Right cardiac atrium (tissue), 5 donors: ENCODE measurements at regions of chr6 and their contacts with region 1.

Region 1: GRCh38 chr6:2634139-2634964 is 116.4 kb downstream of the MYLK4 start:
- DNase-seq: peak; percentile 91 to 95 (median 95)
- ATAC-seq: peak; percentile 95
- H3K4me3 ChIP-seq: peak overlapping the region; percentile 69
- H3K27ac ChIP-seq: peak overlapping the region; percentile 54
- H3K4me1 ChIP-seq: peaks cover 4% of the 10 kb centered on the region
- H3K27me3 ChIP-seq: no peaks in the 10 kb centered on the region

Region 2: GRCh38 chr6:1604158-1605030 is 1030.0 kb before region 1 on chr6:
- intact Hi-C with region 1: loop called (anchors 5 to 10 kb)
- DNase-seq: peak; percentile 78 to 88 (median 88)
- ATAC-seq: peak; percentile 86
- H3K4me3 ChIP-seq: peak overlapping the region; percentile 37
- H3K27ac ChIP-seq: no peak overlapping the region
- H3K4me1 ChIP-seq: no peaks in the 10 kb centered on the region
- H3K27me3 ChIP-seq: no peaks in the 10 kb centered on the region

Region 3: DNA sequence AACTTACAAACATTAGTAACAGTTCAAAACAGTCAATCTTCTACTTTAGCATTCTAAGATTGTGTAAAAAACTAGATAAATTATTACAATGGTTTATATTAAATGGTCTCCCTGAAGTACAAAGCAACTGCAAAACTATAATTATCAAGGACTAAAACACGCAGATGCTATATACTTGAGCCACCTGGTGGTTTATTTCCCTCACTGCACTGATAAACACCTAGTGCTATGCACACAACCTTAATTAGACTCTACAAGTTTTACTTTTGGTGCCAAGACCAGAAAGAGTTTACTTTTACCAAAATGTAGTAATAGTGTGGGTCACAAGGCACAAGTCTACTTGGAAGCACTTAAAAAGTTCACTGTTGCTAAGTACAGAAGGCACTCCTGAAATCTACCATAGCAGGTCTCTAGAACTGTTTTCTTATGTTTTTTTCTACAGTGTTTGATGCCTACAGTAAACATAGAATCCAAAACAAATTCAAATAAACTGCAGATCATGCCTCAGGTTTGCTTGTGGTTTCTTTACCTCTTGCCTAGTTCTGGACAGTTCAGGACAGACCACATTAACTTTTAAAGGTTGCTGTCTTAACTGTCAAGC is 438.2 kb before region 1 on chr6:
- intact Hi-C with region 1: loop called in 1 of 4 experiments (anchors 10 kb)
- DNase-seq: no peak
- ATAC-seq: peak; percentile 71 to 83
- H3K4me3 ChIP-seq: no peak overlapping the region
- H3K27ac ChIP-seq: no peak overlapping the region
- H3K4me1 ChIP-seq: peaks cover 2% of the 10 kb centered on the region
- H3K27me3 ChIP-seq: no peaks in the 10 kb centered on the region

Region 4: DNA sequence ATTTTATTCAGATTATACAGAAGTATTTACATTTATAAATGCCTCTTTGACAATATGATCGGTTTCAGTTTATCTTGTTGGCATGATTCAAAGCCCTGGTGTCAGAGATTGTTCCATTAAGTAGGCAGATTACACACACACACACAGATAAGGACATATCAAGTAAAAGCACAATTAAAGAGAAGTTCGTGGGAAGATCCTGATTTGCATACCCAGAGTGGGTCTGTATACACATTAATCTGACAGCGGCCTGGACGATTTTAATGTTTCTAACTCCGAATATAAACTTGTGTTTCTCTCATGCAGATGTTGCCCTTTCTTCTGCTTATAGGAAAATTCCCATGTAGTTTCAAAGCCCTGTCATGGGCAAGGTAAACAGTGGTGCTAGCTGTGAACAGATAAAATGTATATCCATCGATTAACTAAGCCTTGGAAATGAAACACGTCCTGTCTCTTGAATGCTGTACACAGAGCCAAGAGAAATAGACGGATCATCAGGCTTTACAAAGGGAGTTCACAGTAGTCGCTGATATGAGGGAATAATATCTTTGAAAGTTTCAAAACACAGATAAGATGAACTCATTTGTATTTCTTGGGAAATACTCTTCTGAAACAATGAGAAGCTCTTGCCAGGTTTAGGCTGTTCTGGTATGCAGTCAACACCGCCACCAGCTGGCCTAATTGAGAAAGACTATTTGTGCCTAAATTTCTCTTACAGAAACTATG is 280.8 kb before region 1 on chr6:
- intact Hi-C with region 1: loop called in 1 of 4 experiments (anchors 10 kb)
- DNase-seq: peak; percentile 56 to 74 (median 68)
- ATAC-seq: peak; percentile 91 to 92
- H3K4me3 ChIP-seq: no peak overlapping the region
- H3K27ac ChIP-seq: no peak overlapping the region
- H3K4me1 ChIP-seq: no peaks in the 10 kb centered on the region
- H3K27me3 ChIP-seq: no peaks in the 10 kb centered on the region

Region 5: DNA sequence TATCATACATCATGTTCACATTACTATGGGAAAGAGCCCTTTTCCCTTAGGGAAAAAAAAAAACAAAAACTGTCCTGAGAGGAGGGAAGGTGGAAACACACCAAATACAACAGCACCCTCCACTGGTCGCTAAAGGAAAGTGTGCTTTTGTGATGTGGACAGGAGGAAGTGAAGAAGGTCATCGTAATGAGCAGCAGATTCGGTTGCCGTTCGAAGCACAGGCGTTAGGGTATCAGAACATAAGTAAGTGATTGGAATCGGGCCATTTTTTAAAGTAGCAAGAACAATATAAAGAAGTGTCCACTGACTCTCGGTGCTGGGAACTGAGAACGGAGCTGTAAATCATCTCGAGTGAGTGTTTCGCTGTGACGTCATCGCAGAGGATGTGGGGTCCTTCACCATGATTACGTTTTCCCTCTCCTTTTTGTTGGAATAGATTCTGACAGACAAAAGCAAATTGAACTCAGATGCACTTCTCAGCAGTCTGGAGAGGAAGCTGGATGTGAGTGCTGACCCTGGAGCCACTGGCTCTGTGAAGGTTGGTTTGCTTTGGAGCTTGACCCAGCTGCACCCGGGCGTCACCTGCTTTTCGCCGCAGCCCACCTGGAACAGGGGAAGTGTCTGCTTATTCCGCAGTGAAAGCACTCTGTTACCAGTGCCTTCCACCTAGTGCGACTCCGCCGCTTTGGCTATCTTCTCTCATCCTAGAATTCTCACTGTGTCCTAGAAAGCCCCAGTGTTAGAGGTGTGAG is 185.4 kb before region 1 on chr6:
- intact Hi-C with region 1: loop called in 2 of 4 experiments (anchors 10 kb)
- DNase-seq: peak in 1 of 3 donors; percentile 49
- ATAC-seq: peak; percentile 69 to 83
- H3K4me3 ChIP-seq: peak overlapping the region; percentile 27
- H3K27ac ChIP-seq: no peak overlapping the region
- H3K4me1 ChIP-seq: peaks cover 4% of the 10 kb centered on the region
- H3K27me3 ChIP-seq: no peaks in the 10 kb centered on the region

Region 6: GRCh38 chr6:2478200-2478599 is 156.2 kb before region 1 on chr6:
- intact Hi-C with region 1: loop called in 1 of 4 experiments (anchors 10 kb)
- DNase-seq: peak; percentile 34 to 69 (median 62)
- ATAC-seq: peak; percentile 61 to 68
- H3K4me3 ChIP-seq: no peak overlapping the region
- H3K27ac ChIP-seq: peak overlapping the region; percentile 34
- H3K4me1 ChIP-seq: peaks cover 7% of the 10 kb centered on the region
- H3K27me3 ChIP-seq: no peaks in the 10 kb centered on the region

Region 7: DNA sequence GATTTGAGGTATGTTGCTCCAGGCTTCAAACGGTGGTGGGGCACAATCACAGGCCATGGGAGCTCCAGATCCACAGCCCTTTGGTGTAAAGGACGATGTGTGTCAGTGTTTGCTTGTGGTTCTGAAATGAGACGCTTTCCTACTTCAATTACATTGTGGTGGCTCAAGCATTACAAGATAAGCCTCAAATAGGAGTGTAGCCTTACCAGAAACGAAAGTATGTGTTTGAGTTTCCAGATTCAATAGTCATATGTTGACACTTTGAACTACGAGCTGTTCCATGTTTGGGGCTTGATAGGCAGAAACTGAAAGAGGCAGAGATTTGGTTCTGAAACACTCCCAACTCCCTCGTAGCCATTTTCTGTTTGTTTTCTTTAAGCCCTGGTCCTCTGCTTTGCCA is 70.7 kb before region 1 on chr6:
- intact Hi-C with region 1: no loop called
- DNase-seq: no peak
- ATAC-seq: peak in 1 of 2 donors; percentile 32
- H3K4me3 ChIP-seq: no peak overlapping the region
- H3K27ac ChIP-seq: no peak overlapping the region
- H3K4me1 ChIP-seq: no peaks in the 10 kb centered on the region
- H3K27me3 ChIP-seq: no peaks in the 10 kb centered on the region

Region 8: DNA sequence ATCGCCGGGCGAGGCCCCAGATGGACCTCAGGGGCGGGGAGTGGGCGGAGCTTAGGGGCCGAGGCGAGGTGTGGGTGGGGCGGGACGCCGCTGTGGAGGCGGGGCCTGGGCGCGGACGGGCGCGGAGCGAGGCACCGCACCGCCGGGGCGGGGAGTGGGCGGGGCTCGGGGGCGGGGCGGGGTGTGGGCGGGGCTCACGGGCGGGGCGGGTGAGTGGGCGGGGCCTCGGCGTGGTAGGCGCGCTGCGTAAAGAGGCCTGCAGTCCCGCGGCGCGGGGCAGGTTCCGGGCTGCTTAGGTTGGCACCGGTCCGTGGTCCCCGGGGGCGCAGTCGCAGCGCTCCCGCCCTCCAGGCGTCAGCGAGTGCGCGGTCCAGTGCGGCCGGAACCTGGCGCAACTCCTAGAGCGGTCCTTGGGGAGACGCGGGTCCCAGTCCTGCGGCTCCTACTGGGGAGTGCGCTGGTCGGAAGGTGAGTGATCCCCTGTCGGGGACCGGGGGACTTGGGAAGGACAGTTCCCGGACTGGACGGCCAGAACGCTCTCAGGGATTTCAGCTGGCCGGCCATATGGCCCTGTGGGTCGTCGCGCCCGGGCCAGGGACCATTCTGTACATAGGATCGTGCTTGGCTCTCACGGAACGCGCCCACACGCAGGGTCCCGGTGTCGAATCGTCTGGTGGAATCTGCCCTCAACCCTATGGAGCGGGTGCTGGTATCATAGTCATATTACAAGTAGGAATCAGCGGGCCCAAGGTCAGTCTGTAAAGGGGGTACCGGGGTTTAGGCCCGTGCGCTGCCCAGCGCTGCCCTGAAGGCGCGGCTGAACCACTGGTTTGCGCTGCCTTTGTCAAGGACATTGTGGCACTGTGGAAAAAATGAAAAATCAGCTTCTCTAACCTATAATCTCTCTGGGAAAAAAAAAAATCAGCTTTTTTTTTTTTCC is 365.5 kb after region 1 on chr6 and contains the start of gene NQO2:
- intact Hi-C with region 1: no loop called
- DNase-seq: peak; percentile 95 to 98 (median 98)
- ATAC-seq: peak; percentile 94 to 96
- H3K4me3 ChIP-seq: peak within 1 kb of the TSS; percentile 74
- H3K27ac ChIP-seq: peak within 1 kb of the TSS; percentile 69
- H3K4me1 ChIP-seq: peaks cover 2% of the 10 kb centered on the region
- H3K27me3 ChIP-seq: no peaks in the 10 kb centered on the region
- total RNA-seq, gene NQO2: 38.1 to 60.6 (median 46.8) TPM